H1 (cell line): ENCODE measurements at regions of chr11 and their contacts with region 1.

Region 1: DNA sequence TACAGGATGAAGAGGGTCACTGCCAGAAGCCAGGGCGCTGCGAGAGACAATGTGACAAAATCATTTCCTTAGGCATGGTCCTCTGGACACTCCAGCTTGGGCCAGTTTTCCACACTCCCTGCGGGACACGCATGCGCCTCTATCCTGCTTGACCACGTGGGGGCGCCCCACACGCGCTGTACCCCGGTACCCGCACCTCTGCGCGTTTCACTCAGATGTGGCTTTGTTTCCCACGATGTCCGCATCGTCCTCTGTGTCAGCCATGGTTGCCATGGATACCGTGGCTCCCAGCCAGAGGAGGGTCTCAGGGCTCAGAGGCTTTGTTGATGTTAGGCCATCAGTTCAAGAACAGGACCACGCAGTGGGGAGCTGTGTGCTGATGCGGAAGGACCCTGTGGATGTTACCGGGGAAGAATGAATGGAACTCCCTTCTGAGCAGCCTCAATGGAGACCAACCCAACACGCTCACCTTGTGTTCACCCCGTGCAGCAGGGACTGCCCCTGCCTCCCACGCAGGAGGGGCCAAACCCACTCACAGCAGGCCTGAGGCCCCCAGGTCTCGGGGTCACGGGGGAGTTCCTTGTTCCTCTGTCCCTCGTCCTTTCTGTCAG is 101.1 kb upstream of the SLC22A12 start:
- DNase-seq: peak; percentile 5 to 90
- H3K4me3 ChIP-seq: no peak overlapping the region
- H3K27ac ChIP-seq: no peak overlapping the region
- H3K4me1 ChIP-seq: no peaks in the 10 kb centered on the region; a peak in 2 of 7 replicates
- H3K27me3 ChIP-seq: peaks cover 3 to 21% (median 13%) of the 10 kb centered on the region in 4 experiments
- CTCF ChIP-seq: peak; percentile 82 to 95 (median 93)
- EP300 ChIP-seq: no peak
- POLR2A ChIP-seq: no peak
- RAD21 ChIP-seq: peak; percentile 89 to 91

Region 2: DNA sequence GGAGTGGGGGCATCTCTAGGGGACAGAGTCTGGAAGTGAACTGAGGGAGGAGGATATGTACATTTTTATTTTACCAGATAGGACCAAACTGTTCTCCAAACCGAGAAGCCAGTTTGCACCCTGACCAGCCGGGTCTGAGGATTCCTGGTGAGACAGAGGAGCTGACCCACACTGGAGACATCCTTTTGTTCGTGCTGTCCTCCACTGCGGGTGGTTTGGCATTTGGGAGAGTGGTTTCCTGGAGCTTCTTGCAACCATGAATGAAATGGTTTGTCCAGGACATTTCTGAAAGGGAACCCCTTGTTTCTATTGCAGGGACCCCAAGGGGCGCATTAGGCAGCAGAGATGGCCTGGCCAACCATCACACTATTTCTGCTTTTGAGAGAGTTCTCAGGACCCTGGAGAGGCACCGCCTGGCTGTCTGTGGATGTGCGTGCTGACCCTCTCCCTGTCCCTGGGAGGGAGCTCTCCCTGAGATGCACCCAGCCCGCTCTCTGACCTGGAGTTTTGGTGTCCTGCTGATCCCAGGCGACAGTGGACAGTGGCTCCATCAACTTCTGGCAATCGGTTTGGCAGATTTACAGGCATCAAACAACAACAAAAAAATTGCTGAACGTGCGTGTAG is 20.7 kb after region 1 on chr11:
- CTCF ChIA-PET with region 1: interaction called, 13 read pairs
- POLR2A ChIA-PET with region 1: interaction called, 3 read pairs
- DNase-seq: no peak
- H3K4me3 ChIP-seq: no peak overlapping the region
- H3K27ac ChIP-seq: no peak overlapping the region
- H3K4me1 ChIP-seq: no peaks in the 10 kb centered on the region
- H3K27me3 ChIP-seq: peaks cover 0 to 8% (median 2%) of the 10 kb centered on the region in 4 experiments; a peak in 4 of 7 replicates
- CTCF ChIP-seq: no peak
- EP300 ChIP-seq: no peak
- POLR2A ChIP-seq: no peak
- RAD21 ChIP-seq: peak in 1 of 2 experiments; percentile 8; a peak in 1 of 4 replicates

Region 3: DNA sequence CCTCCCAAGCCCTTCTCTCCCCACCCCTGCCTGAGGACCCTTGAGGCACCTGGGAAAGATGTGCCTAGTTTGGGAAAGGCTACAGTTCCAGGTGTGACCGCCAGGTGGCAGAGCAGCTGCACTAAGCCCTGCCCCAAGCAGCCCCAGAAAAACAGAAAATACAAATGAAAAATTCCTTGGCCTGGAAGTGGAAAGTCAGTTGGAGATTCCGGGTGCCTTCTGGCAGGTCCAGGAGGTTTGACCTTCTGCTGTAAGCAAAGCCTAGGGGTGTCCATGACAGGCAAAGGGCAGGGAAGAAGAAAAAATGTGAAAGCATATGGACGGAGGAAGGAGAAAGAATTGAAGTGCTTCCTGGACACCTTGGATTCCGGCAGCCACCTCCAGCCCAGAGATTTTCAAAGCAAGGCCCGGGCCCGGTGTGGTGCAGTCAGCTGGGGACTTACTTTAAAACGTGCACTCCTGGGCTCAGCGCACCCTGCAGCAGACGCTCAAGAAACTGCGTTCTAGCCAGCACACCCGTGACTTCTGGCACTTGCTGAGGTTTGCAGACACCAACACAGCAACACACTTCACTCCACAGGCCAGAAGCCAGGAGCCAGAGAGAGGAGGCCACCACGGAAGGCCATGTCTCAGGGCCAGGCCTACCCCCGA is 63.7 kb after region 1 on chr11:
- CTCF ChIA-PET with region 1: interaction called, 10 read pairs
- POLR2A ChIA-PET with region 1: no interaction called
- DNase-seq: peak in 1 of 2 experiments; percentile 92
- H3K4me3 ChIP-seq: no peak overlapping the region
- H3K27ac ChIP-seq: no peak overlapping the region
- H3K4me1 ChIP-seq: peaks cover 0 to 8% (median 6%) of the 10 kb centered on the region in 4 experiments; a peak in 6 of 7 replicates
- H3K27me3 ChIP-seq: no peaks in the 10 kb centered on the region; a peak in 3 of 7 replicates
- CTCF ChIP-seq: peak; percentile 90 to 96 (median 90)
- EP300 ChIP-seq: no peak
- POLR2A ChIP-seq: no peak
- RAD21 ChIP-seq: peak; percentile 91 to 93

Region 4: GRCh38 chr11:64675450-64676260 is 185.7 kb after region 1 on chr11:
- CTCF ChIA-PET with region 1: no interaction called
- POLR2A ChIA-PET with region 1: no interaction called
- DNase-seq: no peak
- H3K4me3 ChIP-seq: no peak overlapping the region
- H3K27ac ChIP-seq: no peak overlapping the region
- H3K4me1 ChIP-seq: no peaks in the 10 kb centered on the region; a peak in 1 of 7 replicates
- H3K27me3 ChIP-seq: peaks cover 0 to 3% (median 0%) of the 10 kb centered on the region in 4 experiments; a peak in 3 of 7 replicates
- CTCF ChIP-seq: no peak
- EP300 ChIP-seq: no peak
- POLR2A ChIP-seq: no peak
- RAD21 ChIP-seq: no peak